Stomach (tissue), 19 donors: ENCODE measurements at regions of chr9 and their contacts with region 1.

Region 1: DNA sequence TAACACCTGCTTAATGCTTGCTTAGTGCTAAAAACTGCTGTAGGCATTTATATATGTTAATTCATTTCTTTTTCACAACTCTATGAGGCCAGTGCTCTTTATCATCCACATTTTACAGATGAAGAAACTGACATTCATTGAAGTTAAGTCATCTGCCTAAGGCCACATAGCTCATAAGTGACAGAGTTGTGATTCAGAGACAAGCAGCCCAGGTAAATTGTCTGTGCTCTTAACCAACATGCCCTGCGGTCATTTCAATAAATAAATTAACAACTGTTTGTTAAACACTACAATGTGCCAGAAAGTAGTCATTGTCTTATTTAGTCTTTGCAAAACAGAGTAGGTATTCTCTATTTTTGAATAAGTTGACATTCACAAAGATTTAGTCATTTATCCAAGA is 1354.4 kb upstream of the C9orf72 start:
- DNase-seq: no peak
- H3K4me3 ChIP-seq: no peak overlapping the region
- H3K27ac ChIP-seq: no peak overlapping the region
- H3K4me1 ChIP-seq: no peaks in the 10 kb centered on the region
- H3K27me3 ChIP-seq: no peaks in the 10 kb centered on the region
- CTCF ChIP-seq: no peak
- EP300 ChIP-seq: no peak
- POLR2A ChIP-seq: no peak

Region 2: GRCh38 chr9:28866951-28867350 is 60.8 kb before region 1 on chr9:
- intact Hi-C with region 1: loop called (anchors 10 kb)
- DNase-seq: no peak
- H3K4me3 ChIP-seq: no peak overlapping the region
- H3K27ac ChIP-seq: no peak overlapping the region
- H3K4me1 ChIP-seq: no peaks in the 10 kb centered on the region
- H3K27me3 ChIP-seq: no peaks in the 10 kb centered on the region
- CTCF ChIP-seq: no peak
- EP300 ChIP-seq: no peak
- POLR2A ChIP-seq: no peak